Activated naive CD4-positive, alpha-beta T cell treated with anti-CD3 and anti-CD28 coated beads for 36 hours (primary cell): ENCODE measurements at regions of chr14 and their contacts with region 1.

Region 1: GRCh38 chr14:63727774-63728728 is at the start of gene SGPP1:
- DNase-seq: peak; percentile 80
- H3K4me3 Mint-ChIP-seq: peak within 1 kb of the TSS; percentile 99
- H3K27ac Mint-ChIP-seq: peak within 1 kb of the TSS; percentile 83
- H3K4me1 Mint-ChIP-seq: peaks cover 30% of the 10 kb centered on the region
- H3K27me3 Mint-ChIP-seq: no peaks in the 10 kb centered on the region
- total RNA-seq, gene SGPP1: 10.1 to 10.6 TPM

Region 2: DNA sequence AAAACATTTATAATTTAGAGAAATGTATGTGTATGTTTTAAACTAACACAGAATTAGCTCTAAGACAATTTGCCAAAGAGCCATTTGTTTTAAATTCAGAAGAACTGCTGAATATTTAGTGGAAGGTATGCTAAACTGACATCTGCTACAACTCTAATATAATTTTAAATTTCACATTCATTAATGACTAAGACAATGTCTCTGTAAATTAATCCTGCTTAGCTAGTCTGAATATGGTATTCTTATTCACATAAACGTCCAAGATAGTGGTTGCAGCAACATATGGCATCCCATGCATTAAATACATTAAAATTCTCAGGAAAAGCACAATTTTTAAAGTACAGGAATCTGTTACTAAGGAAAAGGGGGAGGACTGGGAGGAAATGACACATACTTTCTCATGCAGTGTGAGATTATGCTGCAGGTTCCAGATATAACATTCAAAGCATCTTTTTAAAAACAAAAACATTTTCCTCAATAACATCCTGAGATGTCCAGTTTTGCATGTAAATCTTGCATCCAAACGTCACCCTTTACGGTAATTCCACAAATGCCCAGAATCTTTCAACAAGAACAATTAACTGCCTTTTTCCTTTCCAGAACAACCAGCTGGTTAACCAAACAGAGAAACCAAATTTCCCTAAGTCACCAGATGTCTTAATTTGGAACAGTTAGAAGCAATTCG is 113.2 kb before region 1 on chr14:
- CTCF ChIA-PET with region 1: no interaction called
- intact Hi-C with region 1: no loop called
- DNase-seq: no peak
- H3K4me3 Mint-ChIP-seq: no peak overlapping the region
- H3K27ac Mint-ChIP-seq: no peak overlapping the region
- H3K4me1 Mint-ChIP-seq: peaks cover 44% of the 10 kb centered on the region
- H3K27me3 Mint-ChIP-seq: no peaks in the 10 kb centered on the region

Region 3: GRCh38 chr14:63650256-63650952 is 77.6 kb before region 1 on chr14:
- CTCF ChIA-PET with region 1: no interaction called
- intact Hi-C with region 1: loop called (anchors 2 kb)
- DNase-seq: peak; percentile 76
- H3K4me3 Mint-ChIP-seq: peak overlapping the region; percentile 34
- H3K27ac Mint-ChIP-seq: peak overlapping the region; percentile 97
- H3K4me1 Mint-ChIP-seq: peaks cover 50% of the 10 kb centered on the region
- H3K27me3 Mint-ChIP-seq: no peaks in the 10 kb centered on the region

Region 4: GRCh38 chr14:63713765-63714164 is 14.3 kb before region 1 on chr14:
- CTCF ChIA-PET with region 1: interaction called, 3 read pairs
- intact Hi-C with region 1: loop called (anchors 1 kb)
- DNase-seq: no peak
- H3K4me3 Mint-ChIP-seq: no peak overlapping the region
- H3K27ac Mint-ChIP-seq: no peak overlapping the region
- H3K4me1 Mint-ChIP-seq: peaks cover 30% of the 10 kb centered on the region
- H3K27me3 Mint-ChIP-seq: no peaks in the 10 kb centered on the region

Region 5: DNA sequence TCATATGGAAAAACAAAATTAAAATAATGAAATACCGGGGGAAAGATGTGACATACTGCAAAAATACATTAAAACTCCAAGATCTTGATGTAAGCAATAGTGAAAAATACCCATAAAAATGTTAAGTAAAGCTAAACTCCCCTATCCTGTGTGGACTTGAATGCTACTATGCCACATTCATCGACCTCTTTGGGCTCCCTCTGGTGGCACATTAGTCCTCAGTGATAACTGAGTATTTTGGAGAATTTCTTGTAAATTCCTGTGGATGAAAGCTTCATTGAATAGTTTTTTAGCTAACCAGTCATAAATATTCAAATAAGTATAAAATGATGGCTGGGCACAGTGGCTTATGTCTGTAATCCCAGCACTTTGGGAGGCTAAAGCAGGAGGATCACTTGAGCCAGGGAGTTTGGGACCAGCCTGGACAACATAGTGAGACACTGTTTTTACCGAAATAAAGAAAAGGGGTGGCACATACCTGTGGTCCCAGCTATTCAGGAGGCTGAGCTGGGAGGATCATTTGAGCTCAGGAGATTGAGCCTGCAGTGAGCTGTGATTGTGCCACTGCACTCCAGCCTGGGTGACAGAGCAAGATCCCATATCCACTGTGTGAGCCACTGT is 42.2 kb after region 1 on chr14:
- CTCF ChIA-PET with region 1: interaction called, 6 read pairs
- intact Hi-C with region 1: loop called (anchors 1 kb)
- DNase-seq: peak; percentile 72
- H3K4me3 Mint-ChIP-seq: no peak overlapping the region
- H3K27ac Mint-ChIP-seq: no peak overlapping the region
- H3K4me1 Mint-ChIP-seq: no peaks in the 10 kb centered on the region
- H3K27me3 Mint-ChIP-seq: no peaks in the 10 kb centered on the region

Region 6: DNA sequence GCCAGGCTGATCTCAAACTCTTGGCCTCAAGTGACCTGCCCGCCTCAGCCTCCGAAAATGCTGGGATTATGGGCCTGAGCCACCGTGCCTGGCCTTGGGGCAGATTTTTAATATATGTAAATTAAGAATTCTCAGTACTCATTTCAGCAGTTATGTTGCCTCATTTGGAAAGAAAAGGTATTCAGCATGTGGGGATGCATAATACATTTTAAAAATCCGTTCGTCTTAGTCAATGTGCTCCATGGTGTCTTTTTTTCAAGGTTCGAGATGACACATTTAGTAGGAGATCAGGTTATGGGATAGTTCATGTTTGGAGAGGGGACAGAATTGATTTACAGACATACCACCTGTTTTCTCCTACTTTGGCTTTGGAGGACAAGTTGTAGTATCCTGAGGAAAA is 135.0 kb after region 1 on chr14:
- CTCF ChIA-PET with region 1: no interaction called
- intact Hi-C with region 1: loop called (anchors 5 kb)
- DNase-seq: no peak
- H3K4me3 Mint-ChIP-seq: no peak overlapping the region
- H3K27ac Mint-ChIP-seq: no peak overlapping the region
- H3K4me1 Mint-ChIP-seq: peaks cover 55% of the 10 kb centered on the region
- H3K27me3 Mint-ChIP-seq: no peaks in the 10 kb centered on the region

Region 7: DNA sequence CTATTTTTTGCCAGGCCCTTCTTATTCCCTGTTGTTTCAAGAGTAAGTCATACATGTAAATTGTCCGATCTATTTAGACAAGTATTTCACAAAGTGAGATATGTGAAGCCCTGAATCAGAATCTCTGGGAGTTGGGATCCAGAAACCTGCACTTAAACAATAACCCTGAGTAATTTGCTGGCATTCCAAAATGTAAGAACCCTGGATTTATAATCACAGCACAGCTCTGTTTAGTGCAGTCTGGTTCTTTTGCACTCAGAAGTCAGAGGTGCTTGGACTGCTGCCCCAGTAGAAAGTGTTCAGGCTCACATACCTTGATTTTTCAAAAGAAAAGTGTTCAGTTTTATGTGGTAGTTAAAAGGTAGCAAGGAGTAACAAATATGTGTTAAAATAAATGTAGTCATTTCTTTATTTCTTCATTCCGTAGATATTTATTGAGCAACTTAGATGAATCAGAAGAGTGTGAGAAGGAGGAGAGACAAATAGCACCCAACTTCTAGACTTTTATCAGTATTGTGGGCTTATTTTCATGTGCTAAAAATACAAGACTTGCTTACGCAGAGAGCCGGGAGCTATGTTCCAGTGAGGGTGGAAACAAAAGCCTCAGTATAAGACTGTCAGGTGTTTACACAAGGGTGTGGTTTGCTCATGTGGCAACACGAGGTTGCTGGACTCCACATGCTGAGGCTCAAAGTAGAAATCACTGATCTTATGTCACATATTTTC is 194.8 kb after region 1 on chr14:
- CTCF ChIA-PET with region 1: no interaction called
- intact Hi-C with region 1: no loop called
- DNase-seq: no peak
- H3K4me3 Mint-ChIP-seq: no peak overlapping the region
- H3K27ac Mint-ChIP-seq: no peak overlapping the region
- H3K4me1 Mint-ChIP-seq: peaks cover 6% of the 10 kb centered on the region
- H3K27me3 Mint-ChIP-seq: no peaks in the 10 kb centered on the region